Activated CD4-positive, alpha-beta T cell treated with anti-CD3 and anti-CD28 coated beads, Interleukin-2, amount 10 ng/mL, durations not matched to agents 24 days and 14 days (primary cell): ENCODE measurements at regions of chr3 and their contacts with region 1.

Region 1: GRCh38 chr3:188914552-188914951 is 257.2 kb upstream of the TPRG1 start:
- DNase-seq: no peak
- H3K4me3 Mint-ChIP-seq: peak overlapping the region; percentile 23
- H3K27ac Mint-ChIP-seq: peak overlapping the region; percentile 87
- H3K4me1 Mint-ChIP-seq: peaks cover 37% of the 10 kb centered on the region
- H3K27me3 Mint-ChIP-seq: no peaks in the 10 kb centered on the region

Region 2: GRCh38 chr3:187802928-187803259 is 1111.7 kb before region 1 on chr3:
- intact Hi-C with region 1: loop called (anchors 2 kb)
- DNase-seq: peak; percentile 94
- H3K4me3 Mint-ChIP-seq: peak overlapping the region; percentile 36
- H3K27ac Mint-ChIP-seq: peak overlapping the region; percentile 97
- H3K4me1 Mint-ChIP-seq: peaks cover 90% of the 10 kb centered on the region
- H3K27me3 Mint-ChIP-seq: no peaks in the 10 kb centered on the region

Region 3: DNA sequence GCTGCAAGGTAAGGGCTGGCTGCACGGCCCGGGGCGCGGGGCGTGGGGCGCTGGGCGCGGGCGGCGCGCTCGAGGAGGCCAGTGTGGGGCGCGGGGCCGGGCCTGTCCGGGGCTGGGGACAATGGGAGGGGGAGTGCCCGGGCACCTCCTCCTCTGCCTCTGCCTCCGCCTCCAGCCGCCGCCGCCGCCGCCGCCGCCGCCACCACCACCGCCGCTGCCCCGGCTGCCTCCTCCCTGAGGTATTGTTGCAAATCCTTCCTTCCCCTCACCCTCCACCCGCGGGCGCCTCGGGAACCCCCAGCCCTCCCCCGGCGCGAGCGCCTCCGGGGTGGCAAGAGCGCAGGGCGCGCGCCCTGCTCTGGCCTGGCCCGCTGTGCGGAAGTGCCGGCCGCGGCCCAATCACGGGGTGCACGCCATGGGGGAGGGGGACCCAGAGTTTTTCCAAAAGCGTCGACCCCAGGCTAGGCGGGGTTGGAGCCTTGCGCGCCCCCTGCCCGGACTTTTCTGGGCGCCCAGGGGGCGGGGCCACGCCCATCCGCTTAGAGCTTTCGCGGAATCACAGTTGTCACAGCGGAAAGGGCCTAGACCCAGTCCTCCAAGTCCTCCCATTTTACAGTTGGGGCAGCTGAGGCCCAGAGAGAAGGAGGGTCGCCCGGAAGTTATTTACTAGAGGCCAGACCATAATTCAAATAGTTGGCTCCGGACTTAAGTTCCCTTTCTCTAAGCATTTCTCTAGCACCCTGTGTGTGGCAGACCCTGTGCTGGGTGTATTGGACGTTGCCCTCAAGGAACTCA is 760.3 kb before region 1 on chr3 and contains the start of gene LPP:
- intact Hi-C with region 1: loop called (anchors 10 kb)
- DNase-seq: peak; percentile 97
- H3K4me3 Mint-ChIP-seq: peak within 1 kb of the TSS; percentile 86
- H3K27ac Mint-ChIP-seq: peak within 1 kb of the TSS; percentile 90
- H3K4me1 Mint-ChIP-seq: peaks cover 58% of the 10 kb centered on the region
- H3K27me3 Mint-ChIP-seq: no peaks in the 10 kb centered on the region
- total RNA-seq, gene LPP: 39.5 and 41.4 TPM in 2 replicates

Region 4: GRCh38 chr3:188400494-188401243 is 513.9 kb before region 1 on chr3:
- intact Hi-C with region 1: loop called (anchors 5 kb)
- DNase-seq: peak; percentile 81
- H3K4me3 Mint-ChIP-seq: peak overlapping the region; percentile 18
- H3K27ac Mint-ChIP-seq: peak overlapping the region; percentile 68
- H3K4me1 Mint-ChIP-seq: peaks cover 62% of the 10 kb centered on the region
- H3K27me3 Mint-ChIP-seq: no peaks in the 10 kb centered on the region

Region 5: DNA sequence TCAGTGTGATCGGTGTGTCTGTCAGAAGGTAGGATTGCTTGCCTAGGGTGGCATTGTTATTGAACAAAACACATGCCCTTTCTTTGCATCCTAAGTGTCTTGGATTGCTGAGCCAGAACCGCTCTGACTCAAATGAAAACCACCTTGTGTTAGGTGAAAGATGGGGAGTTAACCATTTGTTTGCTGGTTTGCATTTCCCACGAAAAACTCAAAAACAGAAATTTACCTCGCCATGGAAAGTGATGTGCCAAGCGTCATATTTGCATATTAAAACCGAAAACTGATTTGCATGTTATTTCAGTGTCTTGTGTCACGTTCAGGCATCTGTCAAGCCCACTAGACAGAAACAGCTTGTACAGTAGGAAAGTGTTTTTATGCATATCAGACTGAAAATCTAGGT is 217.4 kb before region 1 on chr3:
- intact Hi-C with region 1: loop called (anchors 1 kb)
- DNase-seq: no peak
- H3K4me3 Mint-ChIP-seq: no peak overlapping the region
- H3K27ac Mint-ChIP-seq: peak overlapping the region; percentile 12
- H3K4me1 Mint-ChIP-seq: peaks cover 24% of the 10 kb centered on the region
- H3K27me3 Mint-ChIP-seq: peaks cover 3% of the 10 kb centered on the region

Region 6: GRCh38 chr3:188875413-188875812 is 39.1 kb before region 1 on chr3:
- intact Hi-C with region 1: loop called (anchors 5 kb)
- DNase-seq: no peak
- H3K4me3 Mint-ChIP-seq: no peak overlapping the region
- H3K27ac Mint-ChIP-seq: no peak overlapping the region
- H3K4me1 Mint-ChIP-seq: no peaks in the 10 kb centered on the region
- H3K27me3 Mint-ChIP-seq: no peaks in the 10 kb centered on the region

Region 7: GRCh38 chr3:189132231-189132707 is 217.7 kb after region 1 on chr3:
- intact Hi-C with region 1: loop called (anchors 1 kb)
- DNase-seq: peak; percentile 93
- H3K4me3 Mint-ChIP-seq: peak overlapping the region; percentile 70
- H3K27ac Mint-ChIP-seq: peak overlapping the region; percentile 91
- H3K4me1 Mint-ChIP-seq: peaks cover 25% of the 10 kb centered on the region
- H3K27me3 Mint-ChIP-seq: no peaks in the 10 kb centered on the region